Activated T-helper 2 cell treated with anti-CD3 and anti-CD28 coated beads, Interferon-gamma antibody, Interleukin-2, Interleukin-4, amounts not matched to agents 10 μg/mL and 5 μg/mL and 100 μg/mL, durations not matched to agents 14 hours and 24 hours and 36 hours (primary cell): ENCODE measurements at regions of chr10 and their contacts with region 1.

Region 1: GRCh38 chr10:63720072-63720537 is 198.9 kb downstream of the REEP3 start:
- DNase-seq: peak; percentile 33
- H3K4me3 Mint-ChIP-seq: no peak overlapping the region
- H3K27ac Mint-ChIP-seq: no peak overlapping the region
- H3K4me1 Mint-ChIP-seq: peaks cover 21% of the 10 kb centered on the region
- H3K27me3 Mint-ChIP-seq: peaks cover 25% of the 10 kb centered on the region

Region 2: GRCh38 chr10:63166742-63167258 is 553.3 kb before region 1 on chr10:
- intact Hi-C with region 1: loop called (anchors 1 kb)
- DNase-seq: no peak
- H3K4me3 Mint-ChIP-seq: no peak overlapping the region
- H3K27ac Mint-ChIP-seq: no peak overlapping the region
- H3K4me1 Mint-ChIP-seq: peaks cover 29% of the 10 kb centered on the region
- H3K27me3 Mint-ChIP-seq: no peaks in the 10 kb centered on the region

Region 3: GRCh38 chr10:63217120-63217605 is 502.9 kb before region 1 on chr10:
- intact Hi-C with region 1: loop called (anchors 1 kb)
- DNase-seq: no peak
- H3K4me3 Mint-ChIP-seq: no peak overlapping the region
- H3K27ac Mint-ChIP-seq: no peak overlapping the region
- H3K4me1 Mint-ChIP-seq: peaks cover 39% of the 10 kb centered on the region
- H3K27me3 Mint-ChIP-seq: no peaks in the 10 kb centered on the region

Region 4: DNA sequence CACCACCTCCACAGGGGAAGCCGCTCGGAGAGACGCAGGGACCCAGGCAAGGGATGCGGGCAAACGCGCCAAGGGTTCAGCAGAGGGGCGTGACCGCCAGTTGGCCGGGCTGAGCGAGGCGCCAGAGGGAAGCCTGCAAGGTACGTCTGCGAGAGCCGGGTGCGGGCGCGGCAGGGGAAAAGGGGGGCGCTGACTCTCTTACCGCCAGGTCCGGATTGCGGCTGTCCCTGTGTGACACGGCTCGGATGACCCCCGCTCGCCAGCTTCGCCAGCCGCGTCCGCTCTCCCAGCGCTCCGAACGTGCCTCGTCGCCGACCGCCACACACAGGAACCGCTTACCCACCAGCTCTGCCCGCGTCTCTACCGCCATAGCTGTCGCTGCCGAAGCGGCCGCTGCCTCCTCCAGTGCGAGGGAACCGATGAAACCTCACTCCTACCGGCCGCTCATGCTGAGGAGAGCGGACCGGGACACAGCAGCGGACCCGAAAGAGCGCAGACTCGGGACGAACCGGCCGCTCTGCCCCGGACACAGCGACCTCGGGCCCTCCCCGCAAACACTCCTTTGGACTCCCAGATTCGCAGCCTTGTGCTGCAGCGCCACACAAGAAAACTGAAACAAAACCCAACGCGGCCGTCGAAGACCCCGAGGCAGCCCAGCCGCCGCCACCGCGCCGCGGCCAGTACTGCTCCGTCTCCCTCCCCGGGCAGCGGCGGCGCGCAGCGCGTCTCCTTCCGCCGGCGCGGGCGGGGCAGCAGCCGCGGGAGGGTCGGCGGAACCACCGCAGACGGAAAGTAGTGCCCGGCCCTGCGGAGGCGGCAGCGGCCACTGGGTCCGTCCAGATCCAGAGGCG is 254.6 kb before region 1 on chr10 and contains the start of gene JMJD1C:
- intact Hi-C with region 1: loop called (anchors 10 kb)
- DNase-seq: peak; percentile 47
- H3K4me3 Mint-ChIP-seq: peak within 1 kb of the TSS; percentile 91
- H3K27ac Mint-ChIP-seq: peak within 1 kb of the TSS; percentile 58
- H3K4me1 Mint-ChIP-seq: peaks cover 12% of the 10 kb centered on the region
- H3K27me3 Mint-ChIP-seq: peaks cover 32% of the 10 kb centered on the region
- total RNA-seq, gene JMJD1C: 33.8 and 35.2 TPM in 2 replicates

Region 5: DNA sequence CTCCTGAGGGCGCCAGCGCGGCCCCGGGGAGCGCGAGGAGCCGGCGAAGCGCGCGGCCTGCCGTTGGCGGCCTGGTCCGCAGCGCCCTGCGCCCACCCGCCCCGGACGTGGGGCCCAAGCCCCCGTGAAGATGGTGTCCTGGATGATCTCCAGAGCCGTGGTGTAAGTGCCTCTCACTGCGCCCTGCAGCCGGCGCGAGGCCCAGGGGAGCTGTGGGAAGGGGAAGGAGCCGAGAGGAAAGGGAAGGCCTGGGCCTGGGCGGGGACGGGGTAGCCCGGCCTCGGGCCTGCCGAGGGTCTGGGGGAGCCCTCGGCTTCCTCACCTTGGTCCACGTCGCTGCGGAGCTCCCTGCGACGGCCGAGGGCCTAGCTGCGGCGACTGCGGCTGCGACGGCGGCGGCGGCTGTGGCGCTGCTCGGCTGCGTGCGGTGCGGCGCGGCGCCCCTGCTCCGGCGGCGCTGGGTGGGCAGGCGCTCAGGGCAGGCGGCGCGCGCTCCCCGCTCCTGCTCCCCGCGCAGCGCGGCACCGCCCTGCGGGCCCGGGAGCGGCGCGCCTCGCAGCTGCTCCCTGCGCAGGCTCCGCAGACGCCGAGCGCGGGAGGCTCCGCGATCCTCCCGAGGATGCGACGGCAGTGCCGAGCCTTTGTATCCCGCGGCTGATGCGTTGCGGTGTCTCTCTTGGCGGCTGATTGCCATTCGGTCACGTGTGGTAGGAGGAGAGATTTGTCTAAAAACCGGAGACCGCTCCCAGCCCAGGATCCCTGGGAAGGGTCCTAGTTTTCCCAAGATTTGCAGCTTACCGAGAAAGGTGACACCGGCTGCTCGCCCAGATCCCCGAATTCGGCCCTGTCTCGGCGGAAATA is 198.5 kb before region 1 on chr10:
- intact Hi-C with region 1: loop called (anchors 5 kb)
- DNase-seq: peak; percentile 42
- H3K4me3 Mint-ChIP-seq: peak overlapping the region; percentile 79
- H3K27ac Mint-ChIP-seq: peak overlapping the region; percentile 81
- H3K4me1 Mint-ChIP-seq: peaks cover 51% of the 10 kb centered on the region
- H3K27me3 Mint-ChIP-seq: no peaks in the 10 kb centered on the region

Region 6: DNA sequence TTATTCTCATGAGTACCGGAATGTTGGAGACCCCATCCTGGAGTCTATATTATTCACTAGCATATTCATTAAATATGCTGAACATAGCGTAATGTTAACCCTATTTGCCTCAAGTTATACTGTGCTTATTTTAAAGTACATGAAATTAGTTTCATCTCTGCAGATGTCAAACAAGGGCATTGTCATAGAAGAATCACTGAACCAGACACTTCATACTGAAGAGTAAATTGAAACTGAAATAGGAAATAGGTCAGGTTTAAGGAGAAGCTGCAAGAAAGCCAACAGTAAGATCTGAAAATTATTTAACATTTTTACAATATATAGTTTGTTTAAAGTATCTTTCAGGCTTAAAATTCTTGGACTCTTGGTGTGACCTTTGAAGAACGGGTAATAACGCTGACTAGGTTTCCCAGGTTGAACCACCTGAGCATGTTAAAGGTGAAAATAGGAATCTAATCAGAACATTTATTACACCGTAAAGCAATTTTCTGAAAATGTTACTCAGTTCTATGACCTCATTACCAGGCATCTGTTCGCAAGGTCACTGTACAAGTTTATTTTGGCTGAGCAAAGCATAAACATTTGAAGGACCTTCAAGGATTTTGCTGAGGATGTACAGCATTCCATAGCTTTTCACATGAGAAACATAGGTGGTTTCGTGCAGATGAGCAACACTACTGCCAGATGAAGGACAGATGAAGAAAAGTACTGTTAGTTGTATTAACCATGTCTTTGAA is 116.2 kb before region 1 on chr10:
- intact Hi-C with region 1: no loop called
- DNase-seq: no peak
- H3K4me3 Mint-ChIP-seq: no peak overlapping the region
- H3K27ac Mint-ChIP-seq: no peak overlapping the region
- H3K4me1 Mint-ChIP-seq: peaks cover 3% of the 10 kb centered on the region
- H3K27me3 Mint-ChIP-seq: no peaks in the 10 kb centered on the region